ENCODE measurements at regions of chr17 and their contacts with region 1.

Region 1: DNA sequence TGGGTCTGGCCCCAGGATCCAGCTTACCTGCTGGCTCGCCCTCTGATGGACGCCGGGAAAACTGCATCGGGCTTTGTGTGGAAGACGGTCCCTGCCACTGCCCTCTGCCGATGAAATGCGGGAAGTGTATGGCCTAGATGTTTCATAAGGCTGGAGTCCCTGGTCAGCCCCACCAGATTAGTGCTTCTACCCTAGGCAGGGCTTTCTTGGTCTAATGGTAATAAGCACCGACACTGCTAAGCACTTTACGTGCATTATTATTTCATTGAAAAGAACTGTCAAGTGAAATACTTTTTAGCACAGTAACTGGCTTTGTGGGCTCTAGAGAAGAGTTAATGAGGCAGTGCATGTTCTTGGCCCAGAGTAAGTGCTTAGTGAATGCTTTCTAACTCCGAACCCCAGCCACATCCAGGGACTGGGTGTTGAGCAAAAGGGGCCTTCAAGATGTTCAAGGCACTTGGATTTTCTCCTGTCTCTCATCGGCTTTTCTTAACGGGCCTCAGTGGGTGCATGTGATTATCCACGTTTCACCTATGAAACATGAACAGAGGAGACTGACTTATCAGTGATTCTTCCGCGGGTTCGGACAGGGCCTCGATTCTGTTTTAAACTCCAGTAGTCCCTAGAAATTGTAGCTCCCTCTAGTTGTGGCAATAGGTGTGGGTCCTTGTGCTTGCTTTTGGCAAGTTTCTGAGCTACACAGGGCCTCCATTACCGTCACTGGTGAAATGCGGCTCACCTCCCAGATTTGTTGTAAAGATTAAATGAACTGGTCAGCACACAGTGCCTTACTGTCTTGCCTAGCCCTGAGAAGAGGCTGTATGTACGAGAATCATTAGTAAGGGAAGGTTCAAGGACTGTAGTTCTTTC is 6.6 kb downstream of the TRAF4 start:
- DNase-seq: peak; percentile 97
- H3K4me3 ChIP-seq: no peak overlapping the region
- H3K27ac ChIP-seq: peak overlapping the region; percentile 62
- H3K4me1 ChIP-seq: peaks cover 23% of the 10 kb centered on the region
- H3K27me3 ChIP-seq: no peaks in the 10 kb centered on the region
- CTCF ChIP-seq: peak; percentile 100

Region 2: DNA sequence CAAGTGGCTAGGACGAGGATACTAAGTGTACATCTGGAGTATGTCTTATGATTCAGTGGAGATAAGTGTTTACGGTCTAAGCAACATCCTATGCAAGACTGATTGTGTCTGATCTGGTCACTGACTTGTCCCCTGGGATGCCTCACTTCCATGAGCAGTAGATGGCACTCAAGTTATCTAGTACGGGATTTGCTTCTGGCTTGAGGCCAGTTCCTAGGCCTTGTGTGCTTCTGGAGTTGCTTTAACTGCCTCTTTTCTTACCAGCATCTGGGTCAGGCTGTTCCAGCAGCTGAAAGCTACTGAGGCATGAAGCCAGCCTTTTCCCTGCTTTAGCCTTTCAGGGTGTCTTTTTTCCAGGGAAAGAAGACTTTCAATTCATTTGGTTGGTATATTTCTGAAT is 65.5 kb before region 1 on chr17:
- intact Hi-C with region 1: loop called (anchors 10 kb)
- DNase-seq: peak; percentile 52
- H3K4me3 ChIP-seq: no peak overlapping the region
- H3K27ac ChIP-seq: no peak overlapping the region
- H3K4me1 ChIP-seq: no peaks in the 10 kb centered on the region
- H3K27me3 ChIP-seq: no peaks in the 10 kb centered on the region
- CTCF ChIP-seq: no peak

Region 3: DNA sequence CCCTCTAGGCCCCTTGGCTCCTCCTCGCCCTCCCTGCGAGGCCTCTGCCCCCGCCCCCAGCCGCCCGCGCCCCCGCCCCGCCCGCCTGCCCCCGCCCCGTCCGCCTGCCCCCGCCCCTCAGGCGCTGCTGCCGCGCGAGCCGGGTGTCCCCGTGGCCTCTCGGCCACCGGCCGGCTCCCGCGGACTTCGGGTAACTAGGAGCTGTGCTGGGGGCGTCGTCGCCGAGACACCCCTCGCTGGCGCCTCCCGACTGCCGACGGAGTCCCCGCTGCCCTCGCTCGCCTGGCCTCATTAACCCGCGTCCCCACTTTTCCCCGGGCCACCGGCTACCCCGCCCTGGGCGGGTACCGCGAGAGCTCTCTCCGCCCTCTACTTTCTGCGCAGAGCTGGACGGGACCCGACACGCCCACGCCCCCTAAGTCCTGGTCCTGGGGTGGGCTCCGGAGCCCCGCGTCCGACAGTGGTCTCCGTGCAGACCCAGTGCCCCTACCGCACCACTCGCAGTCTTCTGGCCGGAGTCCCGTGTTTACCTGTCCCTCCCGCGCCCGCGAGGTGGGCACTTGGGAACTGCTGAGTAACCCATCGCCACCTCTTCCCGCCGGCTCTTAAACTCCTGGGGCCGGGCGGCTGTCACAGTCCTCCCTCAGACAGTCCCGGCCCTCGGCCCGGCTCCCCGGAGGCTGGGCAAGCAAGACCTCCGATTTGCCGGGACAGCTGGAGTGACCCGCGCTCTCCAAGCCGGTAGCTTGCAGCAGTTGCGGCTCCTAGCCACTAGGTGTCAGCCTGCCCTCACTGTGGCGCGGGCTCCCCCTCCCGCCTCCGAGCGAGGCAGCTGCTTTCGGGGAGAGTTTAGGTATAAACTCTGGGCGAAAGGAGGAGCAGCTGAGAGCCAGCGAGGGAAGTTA is 23.9 kb before region 1 on chr17 and contains the start of gene TLCD1:
- intact Hi-C with region 1: loop called (anchors 2 kb)
- DNase-seq: peak; percentile 97
- H3K4me3 ChIP-seq: peak within 1 kb of the TSS; percentile 81
- H3K27ac ChIP-seq: peak within 1 kb of the TSS; percentile 99
- H3K4me1 ChIP-seq: peaks cover 19% of the 10 kb centered on the region
- H3K27me3 ChIP-seq: no peaks in the 10 kb centered on the region
- CTCF ChIP-seq: peak; percentile 98
- total RNA-seq, gene TLCD1: 5.7 to 20.4 TPM

Measured in colonic mucosa (tissue), 4 donors.